A549 (cell line): ENCODE measurements at regions of chr15 and their contacts with region 1.

Region 1: GRCh38 chr15:78422571-78423340 is 15.3 kb upstream of the IREB2 start:
- DNase-seq: peak; percentile 74 to 82
- ATAC-seq: peak; percentile 80 to 90
- H3K4me3 ChIP-seq: no peak overlapping the region
- H3K27ac ChIP-seq: no peak overlapping the region
- H3K4me1 ChIP-seq: no peaks in the 10 kb centered on the region
- CTCF ChIP-seq: peak; percentile 95
- EP300 ChIP-seq: no peak
- POLR2A ChIP-seq: no peak
- RAD21 ChIP-seq: peak; percentile 64 to 72

Region 2: DNA sequence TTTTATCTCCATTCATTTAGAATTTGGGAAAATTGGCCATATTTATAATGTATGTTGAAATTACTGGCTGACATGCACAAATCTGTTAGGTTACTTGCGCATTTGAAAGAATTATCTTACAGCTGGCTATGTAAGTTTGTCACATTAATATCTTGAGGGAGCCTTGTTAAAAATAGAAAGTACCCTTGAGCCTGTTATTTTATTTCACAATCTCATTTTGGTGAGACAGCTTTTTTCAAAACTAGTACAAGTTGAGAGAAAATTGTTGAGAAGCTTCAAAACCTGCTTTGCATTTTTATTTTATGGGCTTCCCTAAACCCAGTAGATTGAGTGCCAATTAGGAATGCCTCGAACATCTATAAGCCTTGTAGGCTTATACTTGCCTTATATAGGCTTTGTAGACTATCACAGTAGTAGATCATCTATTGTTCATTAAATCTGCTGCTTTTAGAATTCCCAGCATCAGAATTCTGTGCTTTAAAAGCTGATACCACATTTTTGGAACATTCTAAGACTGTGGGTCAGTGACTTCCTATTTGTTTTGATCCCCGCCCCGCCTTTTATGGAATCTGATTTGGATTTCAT is 267.3 kb before region 1 on chr15:
- CTCF ChIA-PET with region 1: no interaction called
- POLR2A ChIA-PET with region 1: no interaction called
- DNase-seq: no peak
- ATAC-seq: no peak
- H3K4me3 ChIP-seq: no peak overlapping the region
- H3K27ac ChIP-seq: no peak overlapping the region
- H3K4me1 ChIP-seq: peaks cover 18% of the 10 kb centered on the region; the same call in 2 of the 3 replicates
- CTCF ChIP-seq: no peak
- EP300 ChIP-seq: no peak
- POLR2A ChIP-seq: no peak
- RAD21 ChIP-seq: no peak

Region 3: GRCh38 chr15:78329625-78330024 is 93.1 kb before region 1 on chr15:
- CTCF ChIA-PET with region 1: interaction called, 15 read pairs
- POLR2A ChIA-PET with region 1: no interaction called
- DNase-seq: no peak
- ATAC-seq: no peak
- H3K4me3 ChIP-seq: no peak overlapping the region
- H3K27ac ChIP-seq: no peak overlapping the region
- H3K4me1 ChIP-seq: no peaks in the 10 kb centered on the region
- CTCF ChIP-seq: no peak
- EP300 ChIP-seq: no peak
- POLR2A ChIP-seq: no peak
- RAD21 ChIP-seq: no peak

Region 4: DNA sequence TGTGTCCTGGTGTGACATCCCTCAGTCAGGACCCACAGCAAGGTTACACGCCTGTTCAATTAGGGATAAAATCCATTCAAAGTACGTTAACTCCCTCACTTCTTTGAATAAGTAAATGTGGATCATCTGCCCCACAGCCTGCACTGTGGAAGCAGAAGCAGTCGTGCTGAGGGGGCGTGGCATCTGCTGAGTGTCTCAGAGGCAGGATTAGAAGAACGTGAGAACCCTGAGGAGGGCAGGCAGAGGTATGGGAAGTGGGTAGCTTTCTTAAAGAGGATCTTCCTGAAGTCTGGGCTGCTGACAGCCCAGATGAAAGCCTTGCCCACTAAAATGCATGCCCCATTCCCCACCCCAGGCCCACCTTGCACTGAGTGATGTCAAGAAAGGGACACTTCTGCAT is 54.1 kb before region 1 on chr15:
- CTCF ChIA-PET with region 1: interaction called, 13 read pairs
- POLR2A ChIA-PET with region 1: no interaction called
- DNase-seq: no peak
- ATAC-seq: peak; percentile 30 to 45; a peak in 2 of 6 replicates
- H3K4me3 ChIP-seq: no peak overlapping the region
- H3K27ac ChIP-seq: no peak overlapping the region
- H3K4me1 ChIP-seq: peaks cover 8% of the 10 kb centered on the region
- CTCF ChIP-seq: no peak
- EP300 ChIP-seq: no peak
- POLR2A ChIP-seq: no peak
- RAD21 ChIP-seq: no peak

Region 5: DNA sequence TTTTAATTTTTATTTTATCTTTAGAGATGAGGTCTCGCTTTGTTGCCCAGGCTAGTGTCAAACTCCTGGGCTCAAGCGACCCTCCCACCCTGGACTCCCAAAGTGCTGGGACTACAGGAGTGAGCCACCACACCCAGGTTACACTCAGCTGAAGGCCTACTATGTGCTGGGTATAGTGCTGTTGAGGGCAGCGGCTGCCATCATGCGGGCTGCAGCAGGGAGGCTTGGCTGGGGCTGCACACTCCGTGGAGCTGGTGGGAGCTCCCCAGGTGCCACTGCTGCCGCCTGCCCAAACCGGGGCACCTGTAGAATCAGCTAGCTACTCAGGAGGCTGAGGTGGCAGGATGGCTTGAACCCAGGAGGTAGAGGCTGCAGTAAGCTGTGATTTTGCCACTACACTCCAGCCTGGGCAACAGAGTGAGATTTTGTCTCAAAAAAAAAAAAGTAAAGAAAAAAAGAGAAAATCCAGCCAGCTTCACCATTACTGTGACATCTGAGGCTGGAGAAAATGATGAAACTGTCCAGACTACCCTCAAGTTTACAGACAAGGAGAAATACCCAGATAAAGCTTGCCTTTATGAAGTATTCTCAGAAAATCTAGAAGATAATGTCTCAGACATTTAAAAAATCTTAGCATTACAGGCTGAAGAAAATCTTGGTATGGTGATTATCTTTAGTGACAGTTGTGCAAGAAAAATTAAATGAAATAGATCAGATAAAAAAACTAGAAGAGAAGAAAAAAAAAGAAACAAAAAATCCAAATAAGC is 40.5 kb before region 1 on chr15:
- CTCF ChIA-PET with region 1: interaction called, 24 read pairs
- POLR2A ChIA-PET with region 1: no interaction called
- DNase-seq: no peak
- ATAC-seq: no peak
- H3K4me3 ChIP-seq: no peak overlapping the region
- H3K27ac ChIP-seq: no peak overlapping the region
- H3K4me1 ChIP-seq: no peaks in the 10 kb centered on the region
- CTCF ChIP-seq: no peak
- EP300 ChIP-seq: no peak
- POLR2A ChIP-seq: no peak
- RAD21 ChIP-seq: no peak

Region 6: DNA sequence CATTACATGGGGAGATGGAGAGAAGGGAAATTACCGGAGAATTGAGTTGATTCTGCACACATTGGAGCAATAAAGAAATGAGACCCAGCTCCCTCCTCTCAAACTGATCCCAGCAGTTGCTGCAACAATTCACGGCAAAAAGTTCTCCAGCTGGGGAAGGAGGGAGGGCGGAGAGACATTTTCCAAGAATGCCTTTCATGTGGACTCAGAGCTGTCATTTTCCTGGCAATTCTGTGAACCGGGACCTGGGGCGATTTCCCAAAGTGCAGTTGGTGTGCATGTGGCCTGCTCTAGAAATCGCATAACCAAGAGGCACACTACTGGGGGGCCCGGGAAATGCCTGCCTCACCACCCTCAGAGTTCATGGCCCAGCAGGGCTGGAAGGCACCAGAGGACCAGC is 33.4 kb before region 1 on chr15:
- CTCF ChIA-PET with region 1: interaction called, 240 read pairs
- POLR2A ChIA-PET with region 1: no interaction called
- DNase-seq: no peak
- ATAC-seq: no peak
- H3K4me3 ChIP-seq: no peak overlapping the region
- H3K27ac ChIP-seq: no peak overlapping the region
- H3K4me1 ChIP-seq: no peaks in the 10 kb centered on the region
- CTCF ChIP-seq: no peak
- EP300 ChIP-seq: no peak
- POLR2A ChIP-seq: no peak
- RAD21 ChIP-seq: no peak

Region 7: DNA sequence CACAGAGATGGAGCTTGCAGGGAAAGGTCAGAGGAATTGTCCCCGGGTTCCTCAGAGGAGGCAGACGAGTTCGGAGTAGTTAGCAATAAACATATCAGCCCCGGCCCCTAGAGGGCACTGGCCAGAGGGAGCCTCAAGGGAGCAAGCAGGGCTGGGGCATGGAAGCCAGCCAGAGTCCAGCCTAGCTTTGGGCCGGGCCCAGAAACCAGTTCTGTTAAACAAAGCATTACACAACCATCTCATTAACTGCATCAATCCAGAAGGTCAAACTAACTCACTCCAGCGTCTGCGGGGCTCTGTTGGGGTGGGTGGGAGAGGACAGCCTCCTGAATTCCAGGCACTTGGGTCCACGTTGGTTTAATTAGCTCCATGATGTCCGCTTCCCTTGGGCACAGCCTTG is 25.8 kb before region 1 on chr15:
- CTCF ChIA-PET with region 1: interaction called, 240 read pairs
- POLR2A ChIA-PET with region 1: no interaction called
- DNase-seq: peak; percentile 31 to 38
- ATAC-seq: peak; percentile 58 to 86; a peak in 5 of 6 replicates
- H3K4me3 ChIP-seq: no peak overlapping the region
- H3K27ac ChIP-seq: no peak overlapping the region
- H3K4me1 ChIP-seq: no peaks in the 10 kb centered on the region
- CTCF ChIP-seq: peak; percentile 26; the same call in 2 of the 3 replicates
- EP300 ChIP-seq: no peak
- POLR2A ChIP-seq: no peak
- RAD21 ChIP-seq: 0 out of 5 replicates have a peak, but pooled peaks of 1 of the 2 experiments have one; percentile 11

Region 8: GRCh38 chr15:78437762-78438302 is 15.1 kb after region 1 on chr15 and contains the start of gene IREB2:
- CTCF ChIA-PET with region 1: interaction called, 101 read pairs
- POLR2A ChIA-PET with region 1: interaction called, 20 read pairs
- DNase-seq: peak; percentile 99
- ATAC-seq: peak; percentile 93 to 96
- H3K4me3 ChIP-seq: peak within 1 kb of the TSS; percentile 97
- H3K27ac ChIP-seq: peak within 1 kb of the TSS; percentile 93 to 98
- H3K4me1 ChIP-seq: peaks cover 27% of the 10 kb centered on the region
- CTCF ChIP-seq: no peak
- EP300 ChIP-seq: no peak
- POLR2A ChIP-seq: peak; percentile 64
- RAD21 ChIP-seq: no peak
- polyA plus RNA-seq, gene IREB2: 71.0 and 78.1 TPM in 2 replicates